Caco-2 (cell line): ENCODE measurements at regions of chr14 and their contacts with region 1.

Region 1: GRCh38 chr14:79809849-79810612 is 401.3 kb downstream of the DIO2 start:
- DNase-seq: peak; percentile 33 to 38
- H3K4me3 ChIP-seq: no peak overlapping the region
- H3K4me3 Mint-ChIP-seq: no peak overlapping the region
- H3K27ac Mint-ChIP-seq: no peak overlapping the region
- H3K4me1 ChIP-seq: no peaks in the 10 kb centered on the region
- H3K4me1 Mint-ChIP-seq: no peaks in the 10 kb centered on the region
- H3K27me3 ChIP-seq: no peaks in the 10 kb centered on the region
- H3K27me3 Mint-ChIP-seq: no peaks in the 10 kb centered on the region
- CTCF ChIP-seq: peak; percentile 48 to 53

Region 2: DNA sequence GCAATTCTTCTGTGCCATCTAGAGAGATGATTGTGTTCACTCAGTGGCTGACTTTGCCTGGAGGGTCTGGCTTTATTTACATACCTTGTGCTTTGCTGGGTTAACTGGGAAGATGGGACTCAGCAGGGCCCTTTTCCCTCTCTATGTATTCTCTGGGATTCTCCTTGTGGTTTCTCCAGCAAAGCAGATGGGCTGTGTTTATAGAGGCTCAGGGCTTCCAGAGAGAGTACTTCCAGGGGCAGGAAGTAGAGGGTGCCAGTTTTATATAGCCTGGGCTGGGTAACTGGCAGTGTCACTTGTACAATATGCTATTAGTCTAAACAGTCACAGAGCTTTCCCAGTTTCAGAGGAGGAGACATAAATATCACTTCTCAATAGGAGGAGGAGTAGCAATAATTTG is 108.7 kb before region 1 on chr14:
- CTCF ChIA-PET with region 1: no interaction called
- POLR2A ChIA-PET with region 1: no interaction called
- intact Hi-C with region 1: no loop called
- DNase-seq: no peak
- H3K4me3 ChIP-seq: no peak overlapping the region
- H3K4me3 Mint-ChIP-seq: no peak overlapping the region
- H3K27ac Mint-ChIP-seq: no peak overlapping the region
- H3K4me1 ChIP-seq: peaks cover 30% of the 10 kb centered on the region
- H3K4me1 Mint-ChIP-seq: peaks cover 23% of the 10 kb centered on the region
- H3K27me3 ChIP-seq: no peaks in the 10 kb centered on the region
- H3K27me3 Mint-ChIP-seq: no peaks in the 10 kb centered on the region
- CTCF ChIP-seq: no peak

Region 3: DNA sequence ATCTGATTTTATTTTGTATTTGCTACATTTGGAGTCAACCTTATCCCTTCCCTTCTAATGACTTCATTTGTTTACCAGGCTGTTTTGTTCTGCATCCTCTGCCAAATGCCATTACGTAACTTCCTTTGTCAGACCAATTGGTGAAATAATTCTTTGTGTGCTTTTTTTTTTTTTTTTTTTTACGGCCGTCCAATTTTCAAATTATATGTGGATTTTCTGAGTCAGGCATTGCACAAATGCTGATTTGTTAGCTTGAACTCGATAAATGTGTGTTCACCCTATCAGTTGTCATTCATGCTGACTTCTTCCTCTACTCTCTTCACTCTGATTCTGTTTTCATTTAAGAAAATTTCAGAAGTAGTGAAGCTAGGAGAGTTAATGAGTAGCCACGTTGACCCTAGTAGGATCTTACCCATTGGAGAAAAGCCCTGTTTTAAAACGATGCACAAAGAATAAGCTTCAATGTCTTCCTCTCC is 15.1 kb after region 1 on chr14:
- CTCF ChIA-PET with region 1: no interaction called
- POLR2A ChIA-PET with region 1: no interaction called
- intact Hi-C with region 1: no loop called
- DNase-seq: no peak
- H3K4me3 ChIP-seq: no peak overlapping the region
- H3K4me3 Mint-ChIP-seq: no peak overlapping the region
- H3K27ac Mint-ChIP-seq: no peak overlapping the region
- H3K4me1 ChIP-seq: no peaks in the 10 kb centered on the region
- H3K4me1 Mint-ChIP-seq: peaks cover 16% of the 10 kb centered on the region
- H3K27me3 ChIP-seq: no peaks in the 10 kb centered on the region
- H3K27me3 Mint-ChIP-seq: no peaks in the 10 kb centered on the region
- CTCF ChIP-seq: no peak

Region 4: DNA sequence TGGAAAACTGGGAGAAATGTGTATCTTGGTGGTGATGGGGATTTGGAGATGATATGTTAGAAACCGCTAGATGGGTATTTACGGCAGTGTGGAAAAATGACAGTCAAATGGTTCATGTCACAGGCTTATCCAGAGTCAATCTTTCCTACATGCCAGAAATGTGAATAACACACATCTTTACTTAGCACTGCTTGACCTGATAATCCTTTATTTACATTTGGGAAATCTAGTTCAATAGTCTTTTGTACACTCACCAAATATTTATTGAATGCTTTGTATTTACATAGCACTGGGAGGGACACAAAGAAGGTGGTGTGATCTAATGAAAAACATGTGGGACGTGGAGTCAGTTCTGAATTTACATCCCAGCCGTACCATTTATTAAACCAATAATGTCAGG is 193.1 kb after region 1 on chr14:
- CTCF ChIA-PET with region 1: no interaction called
- POLR2A ChIA-PET with region 1: no interaction called
- intact Hi-C with region 1: loop called (anchors 10 kb)
- DNase-seq: peak in 1 of 2 experiments; percentile 25
- H3K4me3 ChIP-seq: no peak overlapping the region
- H3K4me3 Mint-ChIP-seq: no peak overlapping the region
- H3K27ac Mint-ChIP-seq: no peak overlapping the region
- H3K4me1 ChIP-seq: peaks cover 11% of the 10 kb centered on the region
- H3K4me1 Mint-ChIP-seq: peaks cover 12% of the 10 kb centered on the region
- H3K27me3 ChIP-seq: no peaks in the 10 kb centered on the region
- H3K27me3 Mint-ChIP-seq: no peaks in the 10 kb centered on the region
- CTCF ChIP-seq: no peak

Region 5: DNA sequence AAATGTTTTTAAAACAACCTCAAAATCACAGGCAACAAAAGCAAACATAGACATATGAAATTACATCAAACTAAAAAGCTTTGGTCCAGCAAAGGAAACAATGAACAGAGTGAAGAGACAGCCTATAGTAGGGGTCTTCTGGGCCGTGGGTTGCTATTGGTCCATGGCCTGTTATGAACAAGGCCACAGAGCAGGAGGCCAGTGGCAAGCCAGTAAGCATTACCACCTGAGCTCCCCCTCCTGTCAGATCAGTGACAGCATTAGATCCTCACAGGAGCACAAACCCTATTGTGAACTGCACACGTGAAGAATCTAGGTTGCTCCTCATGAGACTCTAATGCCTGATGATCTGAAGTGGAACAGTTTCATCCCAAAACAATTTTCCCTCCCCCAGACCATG is 227.3 kb after region 1 on chr14:
- CTCF ChIA-PET with region 1: no interaction called
- POLR2A ChIA-PET with region 1: no interaction called
- intact Hi-C with region 1: loop called (anchors 1 kb)
- DNase-seq: peak; percentile 12 to 36
- H3K4me3 ChIP-seq: no peak overlapping the region
- H3K4me3 Mint-ChIP-seq: no peak overlapping the region
- H3K27ac Mint-ChIP-seq: no peak overlapping the region
- H3K4me1 ChIP-seq: no peaks in the 10 kb centered on the region
- H3K4me1 Mint-ChIP-seq: no peaks in the 10 kb centered on the region
- H3K27me3 ChIP-seq: no peaks in the 10 kb centered on the region
- H3K27me3 Mint-ChIP-seq: no peaks in the 10 kb centered on the region
- CTCF ChIP-seq: no peak

Region 6: GRCh38 chr14:80607430-80608190 is 797.6 kb after region 1 on chr14:
- CTCF ChIA-PET with region 1: no interaction called
- POLR2A ChIA-PET with region 1: no interaction called
- intact Hi-C with region 1: no loop called
- DNase-seq: no peak
- H3K4me3 ChIP-seq: no peak overlapping the region
- H3K4me3 Mint-ChIP-seq: no peak overlapping the region
- H3K27ac Mint-ChIP-seq: no peak overlapping the region
- H3K4me1 ChIP-seq: no peaks in the 10 kb centered on the region
- H3K4me1 Mint-ChIP-seq: no peaks in the 10 kb centered on the region
- H3K27me3 ChIP-seq: no peaks in the 10 kb centered on the region
- H3K27me3 Mint-ChIP-seq: no peaks in the 10 kb centered on the region
- CTCF ChIP-seq: no peak